ENCODE measurements at regions of chr1 and their contacts with region 1.

Region 1: DNA sequence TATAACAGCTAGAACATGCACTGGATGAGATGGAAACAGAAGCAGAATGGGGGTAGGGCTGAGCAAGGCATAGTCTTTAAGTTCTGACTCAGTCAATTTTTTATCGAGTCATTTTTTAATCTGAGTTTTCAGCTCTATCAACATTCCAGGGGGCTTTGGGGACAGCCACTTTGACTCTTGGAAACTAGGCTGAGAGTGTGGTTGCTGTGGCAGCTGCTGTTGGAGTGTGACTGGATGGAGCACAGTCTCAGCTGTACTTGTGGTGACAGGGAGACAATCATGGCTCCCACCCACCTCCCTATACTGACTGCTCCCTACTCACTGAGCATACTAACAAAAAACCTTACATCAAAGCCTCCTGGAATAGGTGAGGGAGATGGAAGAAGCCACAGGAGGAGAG is 25.0 kb downstream of the GJA5 start:
- DNase-seq: peak in 1 of 3 donors; percentile 54
- ATAC-seq: peak; percentile 66 to 74
- H3K4me3 ChIP-seq: no peak overlapping the region
- H3K27ac ChIP-seq: peak overlapping the region; percentile 71
- H3K4me1 ChIP-seq: no peaks in the 10 kb centered on the region
- H3K27me3 ChIP-seq: no peaks in the 10 kb centered on the region

Region 2: DNA sequence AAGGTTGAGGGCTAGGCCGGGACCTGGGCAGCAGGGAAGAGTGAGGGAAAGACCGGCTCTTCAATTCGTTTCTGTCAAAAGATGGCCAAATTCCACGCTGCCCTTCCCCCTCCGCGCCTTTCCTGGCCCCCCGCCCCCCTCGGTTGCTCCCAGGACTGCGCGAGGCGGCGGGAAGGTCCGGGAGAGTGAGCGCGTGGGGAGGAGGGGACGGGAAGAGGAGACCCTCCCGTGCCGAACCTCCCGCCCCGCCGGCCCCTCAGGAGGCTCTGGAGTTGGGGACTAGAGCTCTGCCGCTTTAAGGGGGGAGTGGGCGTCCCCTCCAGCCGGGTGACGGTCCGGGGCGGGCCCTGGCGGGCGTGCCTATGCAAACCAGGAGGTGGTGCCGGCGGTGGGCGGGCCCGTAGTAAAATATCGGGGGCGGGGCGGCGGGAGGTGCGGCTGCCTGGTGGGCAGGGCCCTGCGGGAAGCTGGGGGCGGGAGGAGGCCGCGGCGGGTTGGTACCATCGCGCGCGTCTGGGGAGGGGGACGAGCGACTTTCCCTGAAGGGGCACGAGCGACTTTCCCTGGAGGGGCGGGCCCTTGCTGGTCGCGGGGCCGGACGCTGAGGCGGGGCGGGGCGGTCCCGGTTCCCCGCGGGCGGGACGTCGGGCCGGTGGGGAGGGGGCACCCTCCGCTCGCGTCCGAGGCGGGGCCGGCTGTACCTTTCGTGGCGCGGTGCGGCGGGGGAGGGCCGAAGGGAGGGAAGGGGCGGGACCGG is 135.9 kb before region 1 on chr1:
- intact Hi-C with region 1: no loop called
- DNase-seq: peak; percentile 99
- ATAC-seq: peak; percentile 96 to 97
- H3K4me3 ChIP-seq: peak overlapping the region; percentile 99
- H3K27ac ChIP-seq: peak overlapping the region; percentile 56
- H3K4me1 ChIP-seq: peaks cover 3% of the 10 kb centered on the region
- H3K27me3 ChIP-seq: no peaks in the 10 kb centered on the region

Region 3: DNA sequence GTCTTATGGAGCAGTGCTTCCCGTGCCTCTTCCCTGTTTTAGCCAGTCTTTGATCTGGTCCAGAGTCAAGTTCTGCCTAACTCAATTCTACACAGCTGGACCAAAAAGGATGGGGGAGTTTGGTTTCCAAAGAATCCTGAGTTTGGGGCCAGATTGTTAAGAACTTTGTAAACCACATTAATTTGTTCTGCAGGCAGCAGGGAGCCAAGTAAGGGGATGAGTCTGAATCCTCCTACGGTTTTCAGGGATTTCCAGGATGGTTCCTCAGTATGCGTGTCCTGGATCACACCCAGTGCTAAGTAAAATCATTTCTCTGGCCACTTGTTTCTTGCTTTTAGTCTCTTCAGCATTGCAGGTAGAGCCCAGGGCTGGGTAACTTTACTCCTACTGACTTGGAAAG is 51.1 kb after region 1 on chr1:
- intact Hi-C with region 1: no loop called
- DNase-seq: no peak
- ATAC-seq: no peak
- H3K4me3 ChIP-seq: no peak overlapping the region
- H3K27ac ChIP-seq: no peak overlapping the region
- H3K4me1 ChIP-seq: no peaks in the 10 kb centered on the region
- H3K27me3 ChIP-seq: no peaks in the 10 kb centered on the region

Region 4: GRCh38 chr1:147821883-147822282 is 86.5 kb after region 1 on chr1:
- intact Hi-C with region 1: loop called in 1 of 4 experiments (anchors 5 kb)
- DNase-seq: peak in 2 of 3 donors; percentile 17 to 22
- ATAC-seq: peak; percentile 94
- H3K4me3 ChIP-seq: no peak overlapping the region
- H3K27ac ChIP-seq: peak overlapping the region; percentile 90
- H3K4me1 ChIP-seq: peaks cover 4% of the 10 kb centered on the region
- H3K27me3 ChIP-seq: no peaks in the 10 kb centered on the region